Tibial artery (tissue), 4 donors: ENCODE measurements at regions of chr7 and their contacts with region 1.

Region 1: GRCh38 chr7:68348401-68348800 is 1249.9 kb upstream of the AUTS2 start:
- DNase-seq: no peak
- H3K4me3 ChIP-seq: no peak overlapping the region
- H3K27ac ChIP-seq: no peak overlapping the region
- H3K4me1 ChIP-seq: no peaks in the 10 kb centered on the region
- H3K27me3 ChIP-seq: no peaks in the 10 kb centered on the region
- CTCF ChIP-seq: no peak

Region 2: DNA sequence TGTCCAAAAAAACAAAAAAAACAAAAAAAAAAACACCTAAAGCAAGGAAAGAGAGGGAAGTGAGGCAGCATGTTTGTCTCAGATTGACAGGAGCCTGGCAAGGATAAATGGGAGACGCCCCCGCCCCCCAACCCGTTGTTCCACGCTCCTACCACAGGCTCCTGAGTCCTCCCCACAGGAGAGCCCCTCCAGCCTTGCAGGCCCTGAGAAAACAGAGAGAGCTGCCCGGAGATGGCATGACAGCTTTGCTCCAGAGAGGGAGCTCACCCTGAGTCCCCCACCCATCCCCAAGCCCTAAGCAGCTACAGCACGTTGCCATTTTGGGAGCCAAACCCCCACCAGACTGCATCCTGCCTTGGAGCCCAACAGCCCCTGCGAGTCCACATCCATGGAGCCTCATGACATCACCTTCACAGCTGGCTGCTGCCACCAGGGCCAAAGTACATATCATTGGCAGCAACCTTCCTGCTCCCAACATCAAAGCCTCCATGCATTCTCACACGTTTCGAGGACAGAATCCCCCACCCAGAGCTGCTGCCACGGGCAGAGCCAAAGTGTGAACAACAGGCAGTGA is 68.5 kb before region 1 on chr7:
- intact Hi-C with region 1: no loop called
- DNase-seq: no peak
- H3K4me3 ChIP-seq: no peak overlapping the region
- H3K27ac ChIP-seq: no peak overlapping the region
- H3K4me1 ChIP-seq: no peaks in the 10 kb centered on the region
- H3K27me3 ChIP-seq: no peaks in the 10 kb centered on the region
- CTCF ChIP-seq: no peak

Region 3: DNA sequence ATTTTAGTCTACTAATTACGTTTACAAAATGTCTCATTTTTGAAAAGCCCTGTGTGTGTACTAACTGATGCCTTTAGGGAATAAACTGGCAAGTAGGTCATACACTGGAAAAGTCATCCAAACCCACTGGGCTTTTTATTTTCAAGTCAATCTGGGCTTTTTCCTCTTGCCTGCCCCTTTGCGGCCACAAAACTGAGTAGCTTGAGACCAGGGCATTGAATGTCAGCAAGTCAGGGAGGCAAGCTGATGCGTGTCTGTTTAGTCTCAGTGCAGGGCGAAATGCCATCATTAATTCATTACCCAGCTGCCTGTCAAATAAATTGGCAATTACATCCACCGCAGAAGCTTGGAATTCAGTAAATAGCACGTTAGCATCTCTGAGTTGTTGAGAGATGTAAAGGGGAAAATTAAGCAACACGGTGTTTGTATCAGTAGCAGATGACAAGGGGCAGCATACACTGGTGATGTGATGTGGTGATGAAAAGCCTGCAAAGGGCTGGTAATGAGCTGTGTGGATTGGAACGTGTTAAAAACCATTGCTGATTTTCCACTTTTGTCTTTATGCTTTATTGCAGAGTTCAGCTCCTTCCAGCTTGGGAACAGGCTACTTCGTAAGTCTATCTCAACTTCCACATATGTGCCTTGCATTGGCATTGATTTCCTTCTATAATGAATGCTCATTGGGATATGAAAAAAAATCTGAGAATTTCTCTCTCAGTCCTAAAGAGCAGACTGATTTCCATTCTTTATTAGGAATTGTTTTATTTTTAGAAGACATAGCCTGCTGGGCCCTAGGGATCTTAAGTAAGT is 1785.8 kb after region 1 on chr7:
- intact Hi-C with region 1: loop called (anchors 5 kb)
- DNase-seq: no peak
- H3K4me3 ChIP-seq: no peak overlapping the region
- H3K27ac ChIP-seq: no peak overlapping the region
- H3K4me1 ChIP-seq: peaks cover 0 to 31% (median under 1%) of the 10 kb centered on the region in 4 donors
- H3K27me3 ChIP-seq: no peaks in the 10 kb centered on the region
- CTCF ChIP-seq: no peak